CD4-positive, alpha-beta memory T cell (primary cell): ENCODE measurements at regions of chr7 and their contacts with region 1.

Region 1: DNA sequence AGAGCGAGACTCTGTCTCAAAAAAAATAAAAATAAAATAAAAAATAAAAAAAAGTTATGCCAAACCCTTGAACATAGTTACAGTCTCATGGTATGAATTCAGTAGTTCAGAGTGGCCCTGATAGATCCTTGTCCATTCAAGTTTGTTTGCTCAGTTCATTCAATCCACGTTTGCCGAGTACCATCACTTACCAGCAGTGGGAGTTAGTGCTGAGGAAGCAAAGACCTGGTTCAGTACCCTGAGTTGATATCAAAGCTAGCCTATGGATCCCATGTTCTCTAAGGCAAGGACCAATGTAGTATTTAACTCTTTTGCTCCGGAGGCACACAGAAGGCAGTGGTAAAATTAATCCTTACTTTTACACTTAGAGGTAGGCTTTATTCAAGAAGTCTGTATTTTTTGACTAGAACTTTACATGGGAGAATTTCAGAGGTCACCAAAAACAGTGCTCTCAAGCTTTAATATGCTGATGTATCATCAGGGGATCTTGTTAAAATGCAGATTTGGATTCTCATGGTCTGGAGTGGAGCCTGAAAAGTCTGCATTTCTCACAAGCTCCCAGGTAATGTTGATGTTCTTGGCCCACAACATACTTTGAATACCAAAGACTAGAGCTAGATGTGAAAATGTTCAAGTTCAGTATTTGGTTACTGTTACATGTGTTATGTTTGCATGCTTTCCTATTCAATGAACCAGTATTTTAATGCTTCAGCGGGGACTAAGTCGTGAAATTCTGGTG is 38.1 kb upstream of the HBP1 start:
- DNase-seq: no peak
- H3K4me3 ChIP-seq: no peak overlapping the region
- H3K4me3 Mint-ChIP-seq: no peak overlapping the region
- H3K27ac ChIP-seq: no peak overlapping the region
- H3K27ac Mint-ChIP-seq: no peak overlapping the region
- H3K4me1 ChIP-seq: peaks cover 11% of the 10 kb centered on the region
- H3K4me1 Mint-ChIP-seq: peaks cover 10 to 16% (median 13%) of the 10 kb centered on the region in 4 donors
- H3K27me3 ChIP-seq: no peaks in the 10 kb centered on the region
- H3K27me3 Mint-ChIP-seq: peaks cover 0 to 3% of the 10 kb centered on the region in 2 donors

Region 2: GRCh38 chr7:107034553-107034952 is 96.1 kb before region 1 on chr7:
- CTCF ChIA-PET with region 1: no interaction called
- POLR2A ChIA-PET with region 1: no interaction called
- intact Hi-C with region 1: no loop called
- DNase-seq: no peak
- H3K4me3 ChIP-seq: no peak overlapping the region
- H3K4me3 Mint-ChIP-seq: no peak overlapping the region
- H3K27ac ChIP-seq: no peak overlapping the region
- H3K27ac Mint-ChIP-seq: no peak overlapping the region
- H3K4me1 ChIP-seq: no peaks in the 10 kb centered on the region
- H3K4me1 Mint-ChIP-seq: no peaks in the 10 kb centered on the region
- H3K27me3 ChIP-seq: no peaks in the 10 kb centered on the region
- H3K27me3 Mint-ChIP-seq: peaks cover 2 to 4% of the 10 kb centered on the region in 2 donors

Region 3: DNA sequence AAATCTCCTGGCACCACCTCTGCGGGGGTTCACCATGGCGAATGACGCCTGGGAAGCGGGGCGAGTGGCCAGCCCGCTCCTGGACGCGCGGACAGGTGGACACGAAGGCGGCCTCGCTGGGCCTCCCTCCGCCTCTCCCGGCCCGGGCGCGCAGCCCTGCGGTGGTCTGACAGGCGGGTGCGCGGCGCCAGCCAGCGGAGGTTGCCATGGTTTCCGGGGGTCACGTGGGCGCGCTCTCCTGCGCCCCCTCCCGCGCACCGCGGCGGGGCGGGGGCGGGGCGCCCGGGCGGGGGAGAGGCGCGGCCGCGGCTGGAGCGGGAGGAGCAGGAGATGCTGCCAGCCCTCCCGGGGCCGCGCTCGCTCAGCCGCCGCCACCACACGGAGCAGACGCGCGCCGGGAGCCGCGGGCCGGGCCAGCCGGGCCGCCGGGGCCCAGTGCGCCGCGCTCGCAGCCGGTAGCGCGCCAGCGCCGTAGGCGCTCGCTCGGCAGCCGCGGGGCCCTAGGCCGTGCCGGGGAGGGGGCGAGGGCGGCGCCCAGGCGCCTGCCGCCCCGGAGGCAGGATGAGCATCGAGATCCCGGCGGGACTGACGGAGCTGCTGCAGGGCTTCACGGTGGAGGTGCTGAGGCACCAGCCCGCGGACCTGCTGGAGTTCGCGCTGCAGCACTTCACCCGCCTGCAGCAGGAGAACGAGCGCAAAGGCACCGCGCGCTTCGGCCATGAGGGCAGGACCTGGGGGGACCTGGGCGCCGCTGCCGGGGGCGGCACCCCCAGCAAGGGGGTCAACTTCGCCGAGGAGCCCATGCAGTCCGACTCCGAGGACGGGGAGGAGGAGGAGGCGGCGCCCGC is 86.1 kb before region 1 on chr7 and contains the start of gene PRKAR2B:
- CTCF ChIA-PET with region 1: no interaction called
- POLR2A ChIA-PET with region 1: no interaction called
- intact Hi-C with region 1: loop called (anchors 2 kb)
- DNase-seq: peak; percentile 73 to 85 (median 80)
- H3K4me3 ChIP-seq: peak within 1 kb of the TSS; percentile 42 to 61
- H3K4me3 Mint-ChIP-seq: peak within 1 kb of the TSS; percentile 85 to 95 (median 89)
- H3K27ac ChIP-seq: no peak within 1 kb of the TSS
- H3K27ac Mint-ChIP-seq: peak within 1 kb of the TSS; percentile 21 to 92 (median 62)
- H3K4me1 ChIP-seq: peaks cover 15% of the 10 kb centered on the region
- H3K4me1 Mint-ChIP-seq: peaks cover 7 to 21% (median 10%) of the 10 kb centered on the region in 4 donors
- H3K27me3 ChIP-seq: peaks cover 30% of the 10 kb centered on the region
- H3K27me3 Mint-ChIP-seq: peaks cover 20 to 26% of the 10 kb centered on the region in 2 donors
- total RNA-seq, gene PRKAR2B: 0.29 to 0.47 TPM